Body of pancreas (tissue), 4 donors: ENCODE measurements at regions of chr5 and their contacts with region 1.

Region 1: DNA sequence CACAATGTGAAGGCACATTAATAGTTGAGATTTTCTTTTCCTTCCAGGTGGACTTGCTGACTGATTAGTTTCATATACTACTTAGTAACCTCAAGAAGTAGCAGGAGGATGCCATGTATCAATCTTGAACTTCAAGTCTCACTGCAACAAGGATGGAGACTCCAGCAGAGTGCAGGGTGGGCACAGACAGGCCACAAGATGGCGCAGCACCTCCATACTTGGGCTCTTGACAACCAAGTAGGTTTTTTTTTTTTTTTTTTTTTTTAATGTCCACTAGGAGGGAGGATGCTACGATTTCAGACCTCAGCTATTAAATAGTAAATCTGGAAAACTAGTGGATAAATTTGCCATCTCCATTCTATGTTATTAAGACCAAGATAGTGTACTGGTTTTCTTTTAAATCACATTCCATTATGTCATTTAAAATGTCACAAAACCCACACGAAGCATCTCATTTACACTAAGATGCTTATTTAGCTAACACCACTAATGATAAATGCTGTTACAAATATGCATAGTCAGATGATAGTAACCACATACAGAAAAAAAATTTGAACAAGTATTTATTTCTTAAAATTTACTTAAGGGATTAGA is 58.6 kb downstream of the IL6ST start:
- DNase-seq: peak; percentile 63 to 85 (median 80)
- ATAC-seq: peak; percentile 45
- H3K4me3 ChIP-seq: no peak overlapping the region
- H3K27ac ChIP-seq: no peak overlapping the region
- H3K4me1 ChIP-seq: peaks cover 3% of the 10 kb centered on the region
- H3K27me3 ChIP-seq: no peaks in the 10 kb centered on the region
- CTCF ChIP-seq: peak; percentile 33 to 89 (median 71)
- POLR2A ChIP-seq: no peak

Region 2: GRCh38 chr5:56200856-56201666 is 264.9 kb after region 1 on chr5:
- intact Hi-C with region 1: loop called (anchors 10 kb)
- DNase-seq: peak; percentile 74 to 86 (median 82)
- ATAC-seq: peak; percentile 98
- H3K4me3 ChIP-seq: no peak overlapping the region
- H3K27ac ChIP-seq: no peak overlapping the region
- H3K4me1 ChIP-seq: peaks cover 4% of the 10 kb centered on the region
- H3K27me3 ChIP-seq: no peaks in the 10 kb centered on the region
- CTCF ChIP-seq: peak; percentile 64 to 97 (median 90)
- POLR2A ChIP-seq: no peak